ENCODE measurements at regions of chr12 and their contacts with region 1.

Region 1: GRCh38 chr12:56521590-56522371 is at the start of gene RBMS2:
- DNase-seq: peak; percentile 88 to 90
- ATAC-seq: peak; percentile 96
- H3K4me3 ChIP-seq: peak within 1 kb of the TSS; percentile 85 to 98
- H3K27ac ChIP-seq: peak within 1 kb of the TSS; percentile 64 to 89
- H3K4me1 ChIP-seq: peaks cover 0 to 2% of the 10 kb centered on the region in 2 donors
- H3K27me3 ChIP-seq: no peaks in the 10 kb centered on the region
- total RNA-seq, gene RBMS2: 67.4 to 72.0 TPM

Region 2: GRCh38 chr12:56630160-56630632 is 108.4 kb after region 1 on chr12 and contains the start of gene BAZ2A:
- intact Hi-C with region 1: loop called in 1 of 2 experiments (anchors 5 kb)
- DNase-seq: peak; percentile 92 to 97
- ATAC-seq: peak; percentile 94
- H3K4me3 ChIP-seq: peak within 1 kb of the TSS; percentile 84 to 97
- H3K27ac ChIP-seq: peak within 1 kb of the TSS in 1 of 2 donors; percentile 38
- H3K4me1 ChIP-seq: peaks cover 0 to 4% of the 10 kb centered on the region in 2 donors
- H3K27me3 ChIP-seq: no peaks in the 10 kb centered on the region
- total RNA-seq, gene BAZ2A: 89.3 to 130 TPM

Measured in aorta (tissue), 5 donors.